ENCODE measurements at regions of chr19 and their contacts with region 1.

Region 1: GRCh38 chr19:56314562-56315077 is at the start of gene ZSCAN5A:
- DNase-seq: peak; percentile 97
- H3K4me3 Mint-ChIP-seq: peak within 1 kb of the TSS; percentile 82
- H3K27ac Mint-ChIP-seq: peak within 1 kb of the TSS; percentile 96
- H3K4me1 Mint-ChIP-seq: peaks cover 22% of the 10 kb centered on the region
- H3K27me3 Mint-ChIP-seq: no peaks in the 10 kb centered on the region
- total RNA-seq, gene ZSCAN5A: 3.7 to 4.1 TPM

Region 2: DNA sequence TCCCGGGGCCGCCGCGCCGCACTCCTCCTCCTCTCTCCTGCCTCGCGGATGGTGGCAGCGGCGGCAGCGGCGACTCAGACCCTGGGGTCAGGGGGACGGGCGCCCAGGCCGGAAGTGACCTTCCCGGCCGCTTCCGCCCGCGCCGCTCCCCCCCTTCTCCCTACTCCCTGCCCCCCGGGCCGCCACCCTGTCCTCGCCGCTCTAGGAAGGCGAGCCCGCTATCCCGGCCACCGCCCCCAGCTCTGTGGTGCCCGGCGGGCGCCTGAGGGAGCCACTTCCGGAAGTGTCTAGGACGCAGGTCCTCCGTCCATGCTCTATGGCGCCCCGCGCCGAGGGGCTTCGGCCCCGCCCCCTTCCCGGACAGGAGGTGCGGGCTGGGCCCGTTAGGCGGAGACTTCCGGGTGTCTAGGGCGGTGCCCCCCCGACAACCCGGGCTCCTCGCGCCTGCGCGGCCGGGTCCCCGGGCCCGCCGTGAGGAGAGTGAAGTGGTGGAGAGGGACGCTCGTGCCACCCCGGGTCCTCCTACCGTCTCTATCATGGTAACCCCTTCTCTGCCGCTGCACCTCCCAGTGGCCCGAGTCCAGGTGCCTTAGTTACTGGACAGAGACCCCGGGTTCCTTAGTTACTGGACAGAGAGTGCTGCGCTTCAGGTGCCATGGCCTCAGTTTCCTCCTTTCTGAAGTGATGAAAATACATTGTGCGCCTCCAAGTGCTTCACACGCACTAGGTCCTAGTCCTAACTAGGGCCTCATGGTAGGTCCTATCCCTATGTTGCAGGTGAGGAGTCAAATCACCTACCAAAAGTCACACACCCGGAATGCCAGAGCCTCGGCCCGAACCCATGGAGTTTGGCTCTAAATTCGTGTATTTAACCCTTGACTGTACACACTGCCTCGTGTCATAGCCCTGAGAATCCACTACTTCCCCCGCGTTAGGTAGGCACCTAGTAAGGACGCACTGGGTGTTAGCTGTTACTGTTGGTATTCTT is 193.1 kb before region 1 on chr19 and contains the start of gene ZNF787:
- CTCF ChIA-PET with region 1: no interaction called
- intact Hi-C with region 1: loop called (anchors 1 kb)
- DNase-seq: peak; percentile 95
- H3K4me3 Mint-ChIP-seq: peak within 1 kb of the TSS; percentile 86
- H3K27ac Mint-ChIP-seq: peak within 1 kb of the TSS; percentile 94
- H3K4me1 Mint-ChIP-seq: peaks cover 52% of the 10 kb centered on the region
- H3K27me3 Mint-ChIP-seq: no peaks in the 10 kb centered on the region
- total RNA-seq, gene ZNF787: 24.2 to 26.1 TPM

Region 3: GRCh38 chr19:56252699-56253422 is 61.8 kb before region 1 on chr19:
- CTCF ChIA-PET with region 1: interaction called, 18 read pairs
- intact Hi-C with region 1: loop called (anchors 5 kb)
- DNase-seq: peak; percentile 87
- H3K4me3 Mint-ChIP-seq: no peak overlapping the region
- H3K27ac Mint-ChIP-seq: no peak overlapping the region
- H3K4me1 Mint-ChIP-seq: peaks cover 3% of the 10 kb centered on the region
- H3K27me3 Mint-ChIP-seq: no peaks in the 10 kb centered on the region

Region 4: GRCh38 chr19:56350416-56351045 is 35.9 kb after region 1 on chr19:
- CTCF ChIA-PET with region 1: interaction called, 3 read pairs
- intact Hi-C with region 1: loop called (anchors 2 kb)
- DNase-seq: peak; percentile 77
- H3K4me3 Mint-ChIP-seq: no peak overlapping the region
- H3K27ac Mint-ChIP-seq: no peak overlapping the region
- H3K4me1 Mint-ChIP-seq: no peaks in the 10 kb centered on the region
- H3K27me3 Mint-ChIP-seq: no peaks in the 10 kb centered on the region

Measured in activated naive CD4-positive, alpha-beta T cell treated with anti-CD3 and anti-CD28 coated beads for 36 hours (primary cell).